ENCODE measurements at regions of chr15 and their contacts with region 1.

Region 1: GRCh38 chr15:34241372-34242330 is 16.8 kb downstream of the EMC4 start:
- DNase-seq: no peak
- ATAC-seq: peak in 3 of 4 donors; percentile 53 to 63 (median 58)
- H3K4me3 ChIP-seq: no peak overlapping the region
- H3K27ac ChIP-seq: no peak overlapping the region
- H3K4me1 ChIP-seq: no peaks in the 10 kb centered on the region
- H3K27me3 ChIP-seq: no peaks in the 10 kb centered on the region
- CTCF ChIP-seq: peak; percentile 57 to 87 (median 77)
- POLR2A ChIP-seq: no peak

Region 2: DNA sequence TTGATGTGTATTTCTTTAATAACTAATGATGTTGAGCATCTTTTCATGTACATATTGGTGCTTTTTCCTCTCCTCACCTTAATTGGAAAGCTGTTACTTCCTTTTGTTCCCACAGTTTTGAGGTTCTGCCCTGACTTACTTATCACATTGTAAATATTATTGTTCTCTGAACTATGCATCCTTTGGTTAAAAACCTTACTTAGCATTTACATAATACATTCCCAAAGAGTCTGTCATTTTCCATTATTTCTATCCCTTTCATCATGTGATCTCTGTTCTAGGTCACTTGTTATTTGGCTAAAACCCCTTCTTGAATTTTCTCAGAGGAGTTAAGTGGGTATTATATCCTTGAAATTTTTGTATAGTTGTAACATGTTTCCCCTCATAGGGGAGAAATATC is 63.0 kb after region 1 on chr15:
- intact Hi-C with region 1: no loop called
- DNase-seq: no peak
- ATAC-seq: no peak
- H3K4me3 ChIP-seq: no peak overlapping the region
- H3K27ac ChIP-seq: no peak overlapping the region
- H3K4me1 ChIP-seq: no peaks in the 10 kb centered on the region
- H3K27me3 ChIP-seq: no peaks in the 10 kb centered on the region
- CTCF ChIP-seq: no peak
- POLR2A ChIP-seq: no peak

Region 3: DNA sequence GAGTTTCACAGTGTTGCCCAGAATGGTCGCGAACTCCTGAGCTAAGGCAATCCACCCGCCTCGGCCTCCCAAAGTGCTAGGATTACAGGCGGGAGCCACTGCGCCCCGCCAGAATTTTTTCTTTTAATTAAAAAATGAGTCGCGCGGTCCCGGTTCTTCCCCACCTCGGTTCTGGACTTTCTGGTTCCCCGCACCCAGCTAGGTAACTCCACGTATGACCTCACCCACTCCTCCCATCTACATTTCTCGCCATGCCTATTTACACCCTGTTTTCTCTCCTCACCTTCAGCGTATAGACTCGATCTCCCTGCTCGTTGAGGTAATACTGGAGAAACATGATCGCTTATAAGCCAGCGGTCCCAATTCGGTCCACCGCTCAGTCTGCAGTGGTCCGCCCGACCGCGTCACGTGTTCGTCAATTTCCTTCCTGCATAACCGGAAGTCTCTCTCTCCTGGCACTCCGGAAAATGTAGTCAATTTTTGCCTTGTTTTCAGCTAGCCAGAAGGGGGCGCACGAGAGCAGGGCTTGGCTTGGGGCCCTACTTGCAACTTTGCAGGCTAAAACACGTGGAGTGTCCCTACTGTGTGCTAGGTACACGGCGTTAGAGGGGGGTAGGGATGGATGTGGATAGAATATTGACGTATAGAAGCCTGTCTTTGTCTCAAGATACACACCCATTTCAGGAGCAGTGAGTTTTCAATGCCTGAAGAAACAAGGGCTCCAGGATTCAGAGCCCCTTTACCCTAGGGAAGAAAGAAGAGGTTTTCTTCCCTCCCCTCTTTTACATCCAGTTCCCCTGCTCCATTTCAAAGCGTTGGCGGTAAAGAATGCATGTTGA is 101.3 kb after region 1 on chr15 and contains the starts of genes NOP10 and NUTM1:
- intact Hi-C with region 1: loop called in 4 of 10 experiments (anchors 5 kb)
- DNase-seq: peak; percentile 91 to 95 (median 92)
- ATAC-seq: peak; percentile 91 to 97 (median 95)
- H3K4me3 ChIP-seq: peak within 1 kb of the TSS; percentile 56 to 94 (median 84)
- H3K27ac ChIP-seq: peak within 1 kb of the TSS; percentile 60 to 96 (median 90)
- H3K4me1 ChIP-seq: peaks cover 0 to 37% (median 15%) of the 10 kb centered on the region in 12 donors
- H3K27me3 ChIP-seq: no peaks in the 10 kb centered on the region
- CTCF ChIP-seq: peak; percentile 87 to 99 (median 96)
- POLR2A ChIP-seq: peak in 1 of 2 donors; percentile 60
- total RNA-seq, gene NOP10: 96.4 to 217 (median 132) TPM
- total RNA-seq, gene NUTM1: not detected

Region 4: DNA sequence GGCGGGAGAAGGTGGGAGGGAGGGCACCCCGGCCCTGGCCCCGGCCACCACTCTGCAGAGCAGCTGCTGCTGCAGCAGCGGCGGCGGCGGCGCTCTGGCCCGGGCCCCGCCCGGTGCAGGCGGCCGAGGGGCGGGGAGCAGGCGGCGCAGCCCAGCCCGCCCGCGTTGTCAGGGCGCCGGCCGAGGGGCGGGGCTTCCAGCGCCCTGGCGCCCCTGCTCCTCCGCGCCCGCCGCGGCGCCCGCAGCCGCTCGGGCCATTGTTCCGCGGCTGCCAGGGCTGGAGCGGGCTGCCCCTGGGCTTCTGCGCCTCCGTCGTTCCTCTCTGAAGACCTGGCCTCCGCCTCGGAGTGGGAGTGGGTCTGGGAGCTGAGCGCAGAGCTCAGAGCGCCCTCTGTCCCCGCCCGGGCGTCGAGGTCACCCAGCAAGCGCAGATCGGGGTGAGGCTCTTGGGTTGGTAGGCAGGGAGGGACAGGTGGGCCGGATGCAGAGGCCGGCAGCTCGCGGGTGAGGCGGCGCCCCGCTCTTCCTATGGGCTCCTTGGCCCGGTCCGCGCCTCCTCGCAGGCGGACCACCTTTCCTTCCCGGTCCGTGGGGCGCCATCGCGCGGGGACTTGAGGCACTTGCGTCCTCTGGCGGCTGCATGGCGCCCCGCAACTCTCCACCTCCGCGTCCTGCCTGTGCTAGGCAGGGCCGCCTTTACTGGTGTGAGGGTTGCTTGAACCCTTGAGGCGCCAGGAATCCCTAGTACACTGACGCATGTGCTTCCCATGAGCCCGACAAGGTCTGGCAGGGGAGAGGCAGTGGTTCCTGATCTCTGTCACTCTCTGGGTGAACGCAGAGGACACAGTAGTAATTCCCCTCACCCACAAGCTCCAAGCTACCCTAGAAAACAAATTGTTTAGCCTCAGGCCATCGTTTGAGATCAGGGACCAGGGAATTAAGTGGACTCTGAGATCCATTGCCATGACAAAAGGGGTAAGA is 125.7 kb after region 1 on chr15 and contains the start of gene LPCAT4:
- intact Hi-C with region 1: loop called in 9 of 10 experiments (anchors 1 to 10 kb)
- DNase-seq: peak; percentile 89 to 94 (median 92)
- ATAC-seq: peak; percentile 82 to 96 (median 90)
- H3K4me3 ChIP-seq: peak within 1 kb of the TSS; percentile 62 to 99 (median 88)
- H3K27ac ChIP-seq: peak within 1 kb of the TSS; percentile 91 to 100 (median 98)
- H3K4me1 ChIP-seq: peaks cover 0 to 25% (median 15%) of the 10 kb centered on the region in 12 donors
- H3K27me3 ChIP-seq: no peaks in the 10 kb centered on the region
- CTCF ChIP-seq: peak; percentile 86 to 99 (median 96)
- POLR2A ChIP-seq: peak in 1 of 2 donors; percentile 75
- total RNA-seq, gene LPCAT4: 9.8 to 80.0 (median 44.8) TPM

Region 5: GRCh38 chr15:34587717-34588674 is 346.3 kb after region 1 on chr15:
- intact Hi-C with region 1: loop called in 3 of 10 experiments (anchors 10 kb)
- DNase-seq: peak in 3 of 5 donors; percentile 43 to 62 (median 45)
- ATAC-seq: peak in 3 of 4 donors; percentile 61 to 76 (median 75)
- H3K4me3 ChIP-seq: peak overlapping the region in 9 of 12 donors; percentile 0 to 44 (median 29)
- H3K27ac ChIP-seq: peak overlapping the region in 2 of 12 donors; percentile 17 to 42
- H3K4me1 ChIP-seq: peaks cover 0 to 12% (median 5%) of the 10 kb centered on the region in 12 donors
- H3K27me3 ChIP-seq: peaks cover 0 to 14% (median 0%) of the 10 kb centered on the region in 9 donors
- CTCF ChIP-seq: peak; percentile 56 to 89 (median 76)
- POLR2A ChIP-seq: no peak

Region 6: GRCh38 chr15:34855397-34855796 is 613.7 kb after region 1 on chr15:
- intact Hi-C with region 1: loop called in 1 of 10 experiments (anchors 10 kb)
- DNase-seq: no peak
- ATAC-seq: peak in 3 of 4 donors; percentile 24 to 41 (median 36)
- H3K4me3 ChIP-seq: no peak overlapping the region
- H3K27ac ChIP-seq: peak overlapping the region in 4 of 12 donors; percentile 9 to 32 (median 23)
- H3K4me1 ChIP-seq: peaks cover 2 to 31% (median 19%) of the 10 kb centered on the region in 12 donors
- H3K27me3 ChIP-seq: no peaks in the 10 kb centered on the region
- CTCF ChIP-seq: no peak
- POLR2A ChIP-seq: no peak

Measured in heart left ventricle (tissue), 16 donors.